Right ventricle myocardium inferior (tissue), 1 donor: ENCODE measurements at regions of chr11 and their contacts with region 1.

Region 1: GRCh38 chr11:114774599-114775361 is 96.5 kb downstream of the NXPE2 start:
- DNase-seq: no peak
- ATAC-seq: peak; percentile 38

Region 2: DNA sequence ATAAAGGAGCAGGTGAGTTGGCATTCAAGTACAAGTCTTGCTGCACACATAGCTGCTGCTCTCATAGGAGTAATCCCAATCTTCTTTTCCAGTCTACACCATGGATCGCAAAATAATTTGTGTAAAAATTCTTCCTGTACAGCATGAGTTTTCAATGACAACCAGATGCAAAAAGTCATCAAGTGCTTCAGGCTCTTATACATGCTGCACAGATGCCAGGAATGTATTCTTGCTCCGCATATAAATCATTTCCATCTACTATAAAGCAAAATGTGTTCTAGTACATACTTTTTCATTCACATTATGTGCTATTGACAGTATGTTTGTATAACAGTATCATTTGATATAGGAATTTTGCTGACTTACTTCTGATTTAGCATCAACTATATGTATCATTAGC is 61.0 kb before region 1 on chr11:
- intact Hi-C with region 1: no loop called
- DNase-seq: no peak
- ATAC-seq: no peak

Region 3: DNA sequence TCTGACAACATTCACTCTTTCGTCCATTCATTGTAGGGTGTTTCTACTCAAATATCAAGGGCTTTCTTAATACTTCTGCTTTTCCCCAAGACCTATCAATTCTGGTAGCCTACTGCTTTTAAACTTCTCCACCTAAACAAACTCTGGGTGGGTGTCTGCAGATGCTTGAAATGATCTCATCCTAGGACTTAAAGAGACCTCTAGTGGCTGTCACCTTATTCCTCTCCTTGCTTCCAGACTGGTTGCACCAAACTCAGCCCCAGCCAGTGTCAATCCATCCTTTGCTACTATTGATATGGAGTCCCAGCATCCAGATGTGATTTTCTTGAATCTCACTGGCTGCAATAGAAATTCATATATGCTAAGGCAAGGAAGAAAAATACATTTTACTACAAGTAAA is 178.3 kb after region 1 on chr11:
- intact Hi-C with region 1: loop called (anchors 1 kb)
- DNase-seq: no peak
- ATAC-seq: no peak

Region 4: DNA sequence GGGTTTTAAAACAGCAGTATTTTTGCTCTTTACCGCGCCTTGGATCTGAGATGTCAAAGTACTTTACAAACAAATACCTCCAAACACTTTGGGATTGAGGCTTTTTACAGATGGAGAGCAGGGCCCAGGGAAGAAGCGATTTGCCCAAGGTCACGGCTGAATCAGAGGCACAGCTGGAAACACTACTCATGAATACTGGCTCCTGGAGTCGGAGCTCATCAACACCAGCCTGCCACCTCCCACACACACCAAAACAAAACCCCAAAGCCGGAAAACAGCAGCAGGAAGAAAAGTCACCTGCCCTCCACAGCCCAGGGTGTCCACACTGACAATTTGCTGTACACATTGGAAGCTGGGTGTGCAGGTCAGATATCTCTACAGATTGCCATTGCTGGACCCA is 390.0 kb after region 1 on chr11:
- intact Hi-C with region 1: no loop called
- DNase-seq: no peak
- ATAC-seq: no peak

Region 5: GRCh38 chr11:115324581-115325432 is 550.0 kb after region 1 on chr11:
- intact Hi-C with region 1: loop called (anchors 5 kb)
- DNase-seq: no peak
- ATAC-seq: no peak